ENCODE measurements at regions of chr3 and their contacts with region 1.

Region 1: GRCh38 chr3:100002599-100003350 is 111.5 kb downstream of the FILIP1L start:
- DNase-seq: peak; percentile 89
- H3K4me3 Mint-ChIP-seq: peak overlapping the region; percentile 31
- H3K27ac Mint-ChIP-seq: peak overlapping the region; percentile 75
- H3K4me1 Mint-ChIP-seq: peaks cover 60% of the 10 kb centered on the region
- H3K27me3 Mint-ChIP-seq: no peaks in the 10 kb centered on the region
- CTCF ChIP-seq: no peak

Region 2: DNA sequence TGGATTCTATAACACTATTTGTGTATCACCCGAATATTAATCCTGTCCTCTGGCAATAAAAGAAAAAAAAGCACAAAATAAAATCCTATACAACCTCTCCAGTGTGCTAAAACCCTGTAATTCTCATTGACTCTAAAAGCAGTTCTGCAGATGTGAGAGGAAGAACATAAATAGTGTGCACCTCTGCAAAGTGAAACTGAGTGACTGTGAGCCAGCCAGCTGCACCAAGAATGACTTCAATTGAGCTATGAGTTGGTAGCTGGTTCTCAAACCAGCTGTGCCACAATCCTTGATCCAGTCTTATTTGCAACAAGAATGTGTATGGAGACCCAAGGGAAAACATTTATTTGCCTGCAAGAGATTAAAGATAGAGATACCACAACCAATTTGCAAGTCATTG is 395.6 kb before region 1 on chr3:
- CTCF ChIA-PET with region 1: no interaction called
- POLR2A ChIA-PET with region 1: no interaction called
- intact Hi-C with region 1: no loop called
- DNase-seq: no peak
- H3K4me3 Mint-ChIP-seq: no peak overlapping the region
- H3K27ac Mint-ChIP-seq: no peak overlapping the region
- H3K4me1 Mint-ChIP-seq: no peaks in the 10 kb centered on the region
- H3K27me3 Mint-ChIP-seq: no peaks in the 10 kb centered on the region
- CTCF ChIP-seq: no peak

Region 3: GRCh38 chr3:99833617-99834205 is 169.1 kb before region 1 on chr3:
- CTCF ChIA-PET with region 1: interaction called, 19 read pairs
- POLR2A ChIA-PET with region 1: interaction called, 4 read pairs
- intact Hi-C with region 1: no loop called
- DNase-seq: no peak
- H3K4me3 Mint-ChIP-seq: no peak overlapping the region
- H3K27ac Mint-ChIP-seq: no peak overlapping the region
- H3K4me1 Mint-ChIP-seq: peaks cover 5% of the 10 kb centered on the region
- H3K27me3 Mint-ChIP-seq: no peaks in the 10 kb centered on the region
- CTCF ChIP-seq: no peak

Region 4: DNA sequence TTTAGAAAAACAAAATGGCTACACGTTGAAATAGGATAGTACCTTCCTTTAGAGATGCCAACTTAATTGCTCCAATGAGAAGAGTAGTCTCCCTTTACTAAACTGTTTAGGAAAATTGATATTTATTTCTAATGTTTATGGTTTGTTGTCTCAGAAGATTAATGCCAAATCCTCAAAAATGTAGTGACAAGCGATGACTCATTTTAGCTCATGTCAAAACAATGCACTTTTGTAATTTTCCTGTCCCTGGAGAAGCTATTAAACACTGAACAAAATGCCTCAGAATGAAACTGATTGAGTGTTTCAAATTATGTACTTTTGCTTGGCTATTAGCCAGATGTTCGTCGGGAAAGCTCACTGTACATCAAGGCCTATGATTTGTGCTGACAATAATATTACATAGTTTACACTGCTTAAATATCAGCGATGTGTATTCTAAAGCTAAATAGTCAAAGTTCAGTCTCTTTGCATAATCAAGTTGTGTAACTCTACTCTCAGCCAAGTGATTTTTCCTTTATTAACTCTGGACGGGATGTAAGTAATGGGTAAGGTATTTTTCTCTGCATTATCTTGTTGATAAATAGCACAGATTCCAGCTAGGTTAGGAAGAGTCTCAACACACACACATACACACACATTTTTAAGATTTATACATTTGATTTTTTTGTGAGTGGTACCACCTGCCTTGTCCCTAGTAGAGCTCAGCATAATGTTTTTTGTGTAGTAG is 101.4 kb before region 1 on chr3:
- CTCF ChIA-PET with region 1: interaction called, 3 read pairs
- POLR2A ChIA-PET with region 1: interaction called, 21 read pairs
- intact Hi-C with region 1: no loop called
- DNase-seq: peak; percentile 79
- H3K4me3 Mint-ChIP-seq: peak overlapping the region; percentile 61
- H3K27ac Mint-ChIP-seq: peak overlapping the region; percentile 93
- H3K4me1 Mint-ChIP-seq: peaks cover 42% of the 10 kb centered on the region
- H3K27me3 Mint-ChIP-seq: no peaks in the 10 kb centered on the region
- CTCF ChIP-seq: no peak

Region 5: DNA sequence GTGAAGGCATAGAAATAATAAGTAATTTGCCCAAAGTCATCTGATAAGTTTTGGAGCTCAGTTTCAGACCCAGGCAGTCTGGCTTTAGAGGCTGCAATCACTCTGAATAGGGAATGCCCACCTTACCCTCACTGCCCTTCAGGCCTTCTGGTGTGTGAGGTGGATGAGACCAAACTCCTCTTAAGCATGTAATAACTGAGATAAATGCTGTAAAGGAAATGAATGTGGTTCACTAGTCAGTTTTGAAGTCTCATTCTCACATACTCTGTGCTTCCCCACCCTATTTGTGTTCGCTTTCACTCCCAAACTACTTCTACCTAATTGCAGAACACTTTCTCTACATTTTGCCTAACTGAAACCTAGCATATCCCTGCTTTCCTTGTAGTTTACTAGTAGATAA is 32.6 kb before region 1 on chr3:
- CTCF ChIA-PET with region 1: interaction called, 3 read pairs
- POLR2A ChIA-PET with region 1: interaction called, 21 read pairs
- intact Hi-C with region 1: no loop called
- DNase-seq: no peak
- H3K4me3 Mint-ChIP-seq: no peak overlapping the region
- H3K27ac Mint-ChIP-seq: no peak overlapping the region
- H3K4me1 Mint-ChIP-seq: peaks cover 35% of the 10 kb centered on the region
- H3K27me3 Mint-ChIP-seq: no peaks in the 10 kb centered on the region
- CTCF ChIP-seq: no peak

Region 6: DNA sequence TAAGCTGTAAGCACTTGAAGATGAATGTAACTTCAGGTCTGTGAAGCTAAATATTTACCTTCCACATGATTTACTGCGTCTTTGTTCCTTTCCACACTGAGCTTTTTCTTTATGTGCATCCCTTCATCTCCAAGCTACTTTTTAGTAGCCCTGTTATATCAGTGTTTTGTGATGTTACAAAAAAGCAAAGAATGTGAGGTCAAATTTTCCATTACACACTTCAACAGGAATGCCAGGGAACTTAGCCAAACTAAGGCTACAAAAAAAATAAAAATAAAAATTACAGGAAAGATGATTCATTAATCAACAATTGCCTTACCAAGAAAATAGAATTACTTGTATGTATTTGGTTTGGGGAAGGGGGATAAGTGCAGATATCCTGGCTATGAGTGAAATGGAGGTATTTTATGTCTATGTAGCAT is 38.6 kb after region 1 on chr3:
- CTCF ChIA-PET with region 1: interaction called, 4 read pairs
- POLR2A ChIA-PET with region 1: interaction called, 32 read pairs
- intact Hi-C with region 1: loop called (anchors 5 kb)
- DNase-seq: peak; percentile 72
- H3K4me3 Mint-ChIP-seq: peak overlapping the region; percentile 29
- H3K27ac Mint-ChIP-seq: peak overlapping the region; percentile 79
- H3K4me1 Mint-ChIP-seq: peaks cover 54% of the 10 kb centered on the region
- H3K27me3 Mint-ChIP-seq: no peaks in the 10 kb centered on the region
- CTCF ChIP-seq: no peak

Region 7: GRCh38 chr3:100260685-100261484 is 258.1 kb after region 1 on chr3 and contains the start of gene TBC1D23:
- CTCF ChIA-PET with region 1: interaction called, 6 read pairs
- POLR2A ChIA-PET with region 1: interaction called, 11 read pairs
- intact Hi-C with region 1: no loop called
- DNase-seq: peak; percentile 99
- H3K4me3 Mint-ChIP-seq: peak within 1 kb of the TSS; percentile 78
- H3K27ac Mint-ChIP-seq: peak within 1 kb of the TSS; percentile 95
- H3K4me1 Mint-ChIP-seq: peaks cover 45% of the 10 kb centered on the region
- H3K27me3 Mint-ChIP-seq: no peaks in the 10 kb centered on the region
- CTCF ChIP-seq: no peak
- total RNA-seq, gene TBC1D23: 34.5 and 34.8 TPM in 2 replicates

Measured in MCF 10A (cell line).